ENCODE measurements at regions of chr2 and their contacts with region 1.

Region 1: GRCh38 chr2:119702918-119703401 is 24.0 kb downstream of the TMEM177 start:
- DNase-seq: peak; percentile 70
- ATAC-seq: peak; percentile 97
- H3K4me3 ChIP-seq: no peak overlapping the region
- H3K4me3 Mint-ChIP-seq: no peak overlapping the region
- H3K27ac ChIP-seq: no peak overlapping the region
- H3K27ac Mint-ChIP-seq: no peak overlapping the region
- H3K4me1 ChIP-seq: peaks cover 0 to 5% of the 10 kb centered on the region in 2 donors
- H3K4me1 Mint-ChIP-seq: no peaks in the 10 kb centered on the region
- H3K27me3 ChIP-seq: peaks cover 0 to 10% (median 4%) of the 10 kb centered on the region in 4 experiments
- H3K27me3 Mint-ChIP-seq: peaks cover 3% of the 10 kb centered on the region
- CTCF ChIP-seq: peak; percentile 97

Region 2: GRCh38 chr2:119826370-119826961 is 123.5 kb after region 1 on chr2:
- CTCF ChIA-PET with region 1: interaction called, 5 read pairs
- POLR2A ChIA-PET with region 1: no interaction called
- intact Hi-C with region 1: loop called (anchors 1 kb)
- DNase-seq: peak; percentile 40
- ATAC-seq: peak; percentile 53
- H3K4me3 ChIP-seq: no peak overlapping the region
- H3K4me3 Mint-ChIP-seq: no peak overlapping the region
- H3K27ac ChIP-seq: no peak overlapping the region
- H3K27ac Mint-ChIP-seq: no peak overlapping the region
- H3K4me1 ChIP-seq: no peaks in the 10 kb centered on the region
- H3K4me1 Mint-ChIP-seq: peaks cover 11% of the 10 kb centered on the region
- H3K27me3 ChIP-seq: no peaks in the 10 kb centered on the region
- H3K27me3 Mint-ChIP-seq: no peaks in the 10 kb centered on the region
- CTCF ChIP-seq: peak; percentile 56

Region 3: DNA sequence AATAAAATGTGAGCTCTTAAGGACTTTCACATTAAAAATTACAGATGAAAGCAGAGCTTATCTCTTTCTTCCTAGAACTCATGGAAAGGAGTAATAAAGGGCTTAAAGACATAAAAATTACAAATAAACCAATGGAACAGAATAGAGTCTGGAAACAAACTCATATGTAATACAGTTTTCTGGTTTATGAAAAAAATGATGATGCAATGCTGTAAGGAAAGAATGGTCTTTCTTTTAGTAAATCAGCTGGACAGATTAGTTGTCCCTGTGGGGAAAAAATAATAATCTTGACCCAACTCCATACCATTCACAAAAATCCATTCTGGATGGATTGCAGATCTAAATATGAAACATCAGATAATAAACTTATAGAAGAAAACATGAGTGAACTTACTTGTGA is 466.1 kb after region 1 on chr2:
- CTCF ChIA-PET with region 1: interaction called, 91 read pairs
- POLR2A ChIA-PET with region 1: no interaction called
- intact Hi-C with region 1: no loop called
- DNase-seq: no peak
- ATAC-seq: no peak
- H3K4me3 ChIP-seq: no peak overlapping the region
- H3K4me3 Mint-ChIP-seq: no peak overlapping the region
- H3K27ac ChIP-seq: no peak overlapping the region
- H3K27ac Mint-ChIP-seq: no peak overlapping the region
- H3K4me1 ChIP-seq: no peaks in the 10 kb centered on the region
- H3K4me1 Mint-ChIP-seq: no peaks in the 10 kb centered on the region
- H3K27me3 ChIP-seq: no peaks in the 10 kb centered on the region
- H3K27me3 Mint-ChIP-seq: no peaks in the 10 kb centered on the region
- CTCF ChIP-seq: no peak

Measured in B cell (primary cell).